Gastrocnemius medialis (tissue), 4 donors: ENCODE measurements at regions of chr14 and their contacts with region 1.

Region 1: GRCh38 chr14:66403183-66403582 is 83.0 kb upstream of the CCDC196 start:
- DNase-seq: no peak
- ATAC-seq: peak in 1 of 2 donors; percentile 51
- H3K4me3 ChIP-seq: no peak overlapping the region
- H3K27ac ChIP-seq: no peak overlapping the region
- H3K4me1 ChIP-seq: peaks cover 0 to 16% of the 10 kb centered on the region in 2 donors
- H3K27me3 ChIP-seq: no peaks in the 10 kb centered on the region
- CTCF ChIP-seq: peak in 3 of 5 experiments; percentile 13 to 32 (median 28)
- POLR2A ChIP-seq: no peak

Region 2: GRCh38 chr14:66359500-66359899 is 43.7 kb before region 1 on chr14:
- in situ Hi-C with region 1: no loop called
- intact Hi-C with region 1: loop called (anchors 1 kb)
- DNase-seq: no peak
- ATAC-seq: no peak
- H3K4me3 ChIP-seq: no peak overlapping the region
- H3K27ac ChIP-seq: no peak overlapping the region
- H3K4me1 ChIP-seq: no peaks in the 10 kb centered on the region
- H3K27me3 ChIP-seq: no peaks in the 10 kb centered on the region
- CTCF ChIP-seq: peak; percentile 30 to 72 (median 64)
- POLR2A ChIP-seq: no peak

Region 3: GRCh38 chr14:66568220-66568619 is 165.0 kb after region 1 on chr14:
- in situ Hi-C with region 1: no loop called
- intact Hi-C with region 1: loop called (anchors 10 kb)
- DNase-seq: no peak
- ATAC-seq: no peak
- H3K4me3 ChIP-seq: no peak overlapping the region
- H3K27ac ChIP-seq: no peak overlapping the region
- H3K4me1 ChIP-seq: peaks cover 0 to 12% of the 10 kb centered on the region in 2 donors
- H3K27me3 ChIP-seq: no peaks in the 10 kb centered on the region
- CTCF ChIP-seq: no peak
- POLR2A ChIP-seq: no peak

Region 4: DNA sequence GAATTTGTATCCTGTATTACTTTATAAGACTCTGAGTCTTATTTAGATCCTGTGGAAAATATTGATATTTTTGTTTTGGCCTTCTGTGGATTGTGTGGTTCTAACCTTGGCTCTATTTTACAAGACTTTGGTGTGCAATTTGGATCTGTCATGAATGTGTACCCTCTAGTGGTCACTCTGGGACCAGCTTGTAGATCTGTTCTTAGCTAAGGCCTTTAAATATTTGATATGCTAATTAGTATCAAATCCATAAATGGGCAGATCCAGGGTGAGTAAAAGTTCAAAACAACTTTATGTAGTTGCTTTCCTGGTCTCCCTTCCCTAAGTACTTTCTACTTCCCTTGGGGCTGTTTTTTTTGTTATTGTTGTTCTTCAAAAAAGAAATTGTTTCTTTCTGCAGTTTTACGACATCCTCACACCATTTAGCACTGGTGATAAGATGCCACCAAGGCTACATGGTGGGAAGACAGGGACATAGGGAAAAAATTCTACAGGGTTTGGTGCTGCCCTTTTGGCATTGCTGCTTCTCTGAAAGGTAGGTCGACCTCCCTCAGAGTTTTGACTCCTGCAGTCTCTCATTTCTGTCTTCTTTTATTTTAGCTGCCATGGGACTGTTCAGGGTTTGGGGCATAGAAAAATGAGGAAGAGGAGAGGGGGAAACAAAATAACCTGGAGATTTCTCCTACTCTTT is 343.3 kb after region 1 on chr14:
- in situ Hi-C with region 1: no loop called
- intact Hi-C with region 1: loop called (anchors 2 kb)
- DNase-seq: no peak
- ATAC-seq: peak in 1 of 2 donors; percentile 53
- H3K4me3 ChIP-seq: no peak overlapping the region
- H3K27ac ChIP-seq: no peak overlapping the region
- H3K4me1 ChIP-seq: peaks cover 19 to 21% of the 10 kb centered on the region in 2 donors
- H3K27me3 ChIP-seq: no peaks in the 10 kb centered on the region
- CTCF ChIP-seq: peak; percentile 33 to 62 (median 41)
- POLR2A ChIP-seq: no peak